Activated naive CD4-positive, alpha-beta T cell treated with anti-CD3 and anti-CD28 coated beads for 36 hours (primary cell): ENCODE measurements at regions of chr11 and their contacts with region 1.

Region 1: DNA sequence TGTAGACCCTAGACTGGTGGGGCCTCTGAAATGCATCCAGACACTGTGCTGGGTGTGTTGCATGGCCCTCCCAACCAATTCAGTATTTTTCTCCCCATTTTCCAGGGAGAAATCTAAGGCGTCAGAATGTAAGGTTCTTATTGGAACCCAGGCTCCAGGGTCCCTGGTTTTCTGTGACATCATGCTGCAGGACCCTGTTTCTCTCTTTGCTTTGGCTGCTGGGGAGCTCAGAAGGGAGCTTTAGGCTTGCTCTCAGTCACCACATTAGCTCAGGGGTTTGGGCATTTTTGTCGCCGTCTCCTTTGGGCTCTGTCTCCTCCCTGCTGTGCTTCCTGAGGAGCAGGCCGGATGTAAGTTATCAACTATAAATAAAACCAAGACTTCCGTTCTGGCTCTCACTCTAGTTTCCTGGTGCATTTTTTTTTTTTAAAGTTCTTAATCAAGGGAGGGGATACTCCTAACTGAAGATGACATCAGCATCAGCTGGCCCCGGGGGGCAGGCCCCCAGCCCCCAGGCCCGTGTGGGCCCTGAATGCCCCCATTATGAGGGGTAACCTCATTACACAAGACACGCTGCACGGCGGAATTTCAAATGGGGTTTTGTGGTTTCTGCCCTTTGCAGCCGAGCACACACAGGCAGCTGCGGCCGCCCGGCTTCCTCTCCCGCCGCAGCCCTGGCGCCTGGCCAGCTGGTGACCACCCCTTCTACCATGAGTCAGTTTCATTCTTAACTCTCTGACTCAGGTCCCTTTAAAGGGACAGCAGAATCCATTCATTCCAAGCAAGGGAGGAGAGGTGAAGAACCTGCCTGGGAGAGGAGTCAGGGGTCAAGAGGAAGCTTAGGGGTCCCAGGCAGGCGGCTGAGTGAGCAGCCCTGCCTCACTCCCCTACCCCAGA is 3.2 kb downstream of the MYEOV start:
- DNase-seq: peak; percentile 89
- H3K4me3 Mint-ChIP-seq: no peak overlapping the region
- H3K27ac Mint-ChIP-seq: no peak overlapping the region
- H3K4me1 Mint-ChIP-seq: peaks cover 48% of the 10 kb centered on the region
- H3K27me3 Mint-ChIP-seq: no peaks in the 10 kb centered on the region

Region 2: DNA sequence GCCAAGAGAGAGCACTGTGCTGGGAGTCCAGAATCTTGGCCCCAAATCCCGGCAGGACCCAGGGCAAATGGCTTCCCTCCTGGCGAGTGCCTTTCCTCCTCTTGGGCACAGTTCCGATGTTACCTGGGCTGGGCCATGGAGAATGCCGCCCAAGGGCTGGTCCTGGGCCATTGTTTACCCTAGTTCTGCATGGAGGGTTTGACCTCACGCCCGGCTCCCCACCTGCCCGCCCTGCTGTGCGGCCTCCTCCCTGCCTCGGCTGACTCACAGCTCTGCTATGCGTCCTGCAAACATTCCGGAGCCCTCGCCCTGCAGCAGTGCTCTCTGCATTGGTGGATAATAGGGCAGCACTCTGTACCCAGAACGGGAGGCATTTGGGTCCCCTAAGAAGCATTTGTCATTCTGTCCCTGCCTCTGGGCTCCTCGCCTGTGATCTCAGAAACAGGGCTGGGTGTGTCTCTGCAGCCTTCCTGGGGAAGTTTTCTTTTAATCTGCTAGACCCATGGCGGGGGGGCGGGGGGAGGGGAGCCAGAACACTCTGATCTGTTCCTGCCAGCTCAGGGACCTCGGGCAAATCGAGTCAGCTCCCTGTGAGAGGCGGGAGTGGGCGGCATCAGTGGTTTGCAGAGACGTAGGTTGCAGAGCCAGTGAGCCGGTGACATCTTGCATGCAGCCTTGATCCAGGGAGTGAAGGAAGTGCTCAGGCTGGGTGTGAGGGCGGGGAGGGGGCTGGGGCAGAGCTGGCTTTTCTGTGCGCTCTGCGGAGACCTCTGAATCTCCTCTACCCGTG is 174.3 kb before region 1 on chr11:
- CTCF ChIA-PET with region 1: interaction called, 3 read pairs
- intact Hi-C with region 1: loop called (anchors 2 kb)
- DNase-seq: peak; percentile 88
- H3K4me3 Mint-ChIP-seq: peak overlapping the region; percentile 32
- H3K27ac Mint-ChIP-seq: peak overlapping the region; percentile 18
- H3K4me1 Mint-ChIP-seq: peaks cover 44% of the 10 kb centered on the region
- H3K27me3 Mint-ChIP-seq: no peaks in the 10 kb centered on the region

Region 3: GRCh38 chr11:69311767-69312385 is 14.7 kb after region 1 on chr11:
- CTCF ChIA-PET with region 1: interaction called, 10 read pairs
- intact Hi-C with region 1: no loop called
- DNase-seq: peak; percentile 50
- H3K4me3 Mint-ChIP-seq: no peak overlapping the region
- H3K27ac Mint-ChIP-seq: peak overlapping the region; percentile 25
- H3K4me1 Mint-ChIP-seq: peaks cover 28% of the 10 kb centered on the region
- H3K27me3 Mint-ChIP-seq: no peaks in the 10 kb centered on the region

Region 4: GRCh38 chr11:69352715-69353325 is 55.7 kb after region 1 on chr11:
- CTCF ChIA-PET with region 1: no interaction called
- intact Hi-C with region 1: loop called (anchors 5 kb)
- DNase-seq: peak; percentile 74
- H3K4me3 Mint-ChIP-seq: no peak overlapping the region
- H3K27ac Mint-ChIP-seq: no peak overlapping the region
- H3K4me1 Mint-ChIP-seq: peaks cover 15% of the 10 kb centered on the region
- H3K27me3 Mint-ChIP-seq: no peaks in the 10 kb centered on the region

Region 5: DNA sequence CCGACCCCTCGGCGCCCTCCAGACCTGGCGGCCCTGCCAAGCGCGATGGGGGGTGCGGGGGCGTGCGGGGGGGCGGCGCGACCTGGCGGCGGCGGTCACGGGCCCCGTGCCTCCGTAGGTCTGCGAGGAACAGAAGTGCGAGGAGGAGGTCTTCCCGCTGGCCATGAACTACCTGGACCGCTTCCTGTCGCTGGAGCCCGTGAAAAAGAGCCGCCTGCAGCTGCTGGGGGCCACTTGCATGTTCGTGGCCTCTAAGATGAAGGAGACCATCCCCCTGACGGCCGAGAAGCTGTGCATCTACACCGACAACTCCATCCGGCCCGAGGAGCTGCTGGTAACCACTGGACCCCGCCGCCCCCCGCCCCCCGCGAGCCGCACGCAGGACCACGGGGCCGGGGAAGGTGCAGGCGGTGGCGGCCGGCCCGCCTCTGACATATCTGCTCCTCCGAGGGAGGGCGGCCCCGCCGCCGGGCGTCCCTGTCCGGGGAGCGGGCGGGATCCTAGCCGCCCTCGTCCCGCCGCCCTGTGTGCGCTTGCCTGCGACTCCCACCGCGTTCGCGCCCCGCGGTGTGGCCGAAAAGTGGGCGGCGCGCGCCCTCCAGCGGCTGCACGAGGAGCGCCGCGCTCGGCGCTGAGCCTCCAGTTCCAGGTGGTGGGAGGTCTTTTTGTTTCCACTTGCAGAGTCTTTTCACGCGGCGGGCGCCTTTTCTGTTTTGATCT is 345.9 kb after region 1 on chr11:
- CTCF ChIA-PET with region 1: interaction called, 21 read pairs
- intact Hi-C with region 1: loop called (anchors 1 kb)
- DNase-seq: peak; percentile 71
- H3K4me3 Mint-ChIP-seq: peak overlapping the region; percentile 52
- H3K27ac Mint-ChIP-seq: no peak overlapping the region
- H3K4me1 Mint-ChIP-seq: peaks cover 27% of the 10 kb centered on the region
- H3K27me3 Mint-ChIP-seq: peaks cover 20% of the 10 kb centered on the region